Activated T-helper 2 cell treated with anti-CD3 and anti-CD28 coated beads, Interferon-gamma antibody, Interleukin-2, Interleukin-4, amounts not matched to agents 10 μg/mL and 5 μg/mL and 100 μg/mL, durations not matched to agents 14 hours and 24 hours and 36 hours (primary cell): ENCODE measurements at regions of chr6 and their contacts with region 1.

Region 1: DNA sequence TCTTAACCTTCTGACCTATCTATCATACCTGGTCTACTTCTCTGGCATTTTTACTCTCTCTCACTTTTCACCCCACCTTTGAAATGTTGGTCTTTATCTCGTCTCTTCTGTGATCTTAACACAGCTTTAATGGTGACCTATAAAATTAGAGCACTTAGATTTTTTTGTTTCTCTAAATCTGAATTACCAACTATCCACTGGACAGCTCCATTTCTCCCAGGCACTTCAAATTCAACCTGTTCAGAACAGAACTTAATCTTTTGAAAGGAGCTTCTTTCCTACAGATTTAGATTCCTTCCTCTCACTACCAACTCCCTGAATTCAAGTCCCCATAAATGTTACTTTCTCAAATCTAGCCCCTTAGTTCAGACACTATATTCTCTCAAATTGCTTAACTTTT is 15.0 kb upstream of the MTFR2 start:
- DNase-seq: no peak
- H3K4me3 Mint-ChIP-seq: no peak overlapping the region
- H3K27ac Mint-ChIP-seq: peak overlapping the region; percentile 9
- H3K4me1 Mint-ChIP-seq: peaks cover 34% of the 10 kb centered on the region
- H3K27me3 Mint-ChIP-seq: no peaks in the 10 kb centered on the region

Region 2: GRCh38 chr6:134994431-134994830 is 1270.7 kb before region 1 on chr6:
- intact Hi-C with region 1: loop called (anchors 5 kb)
- DNase-seq: no peak
- H3K4me3 Mint-ChIP-seq: no peak overlapping the region
- H3K27ac Mint-ChIP-seq: no peak overlapping the region
- H3K4me1 Mint-ChIP-seq: peaks cover 34% of the 10 kb centered on the region
- H3K27me3 Mint-ChIP-seq: no peaks in the 10 kb centered on the region

Region 3: DNA sequence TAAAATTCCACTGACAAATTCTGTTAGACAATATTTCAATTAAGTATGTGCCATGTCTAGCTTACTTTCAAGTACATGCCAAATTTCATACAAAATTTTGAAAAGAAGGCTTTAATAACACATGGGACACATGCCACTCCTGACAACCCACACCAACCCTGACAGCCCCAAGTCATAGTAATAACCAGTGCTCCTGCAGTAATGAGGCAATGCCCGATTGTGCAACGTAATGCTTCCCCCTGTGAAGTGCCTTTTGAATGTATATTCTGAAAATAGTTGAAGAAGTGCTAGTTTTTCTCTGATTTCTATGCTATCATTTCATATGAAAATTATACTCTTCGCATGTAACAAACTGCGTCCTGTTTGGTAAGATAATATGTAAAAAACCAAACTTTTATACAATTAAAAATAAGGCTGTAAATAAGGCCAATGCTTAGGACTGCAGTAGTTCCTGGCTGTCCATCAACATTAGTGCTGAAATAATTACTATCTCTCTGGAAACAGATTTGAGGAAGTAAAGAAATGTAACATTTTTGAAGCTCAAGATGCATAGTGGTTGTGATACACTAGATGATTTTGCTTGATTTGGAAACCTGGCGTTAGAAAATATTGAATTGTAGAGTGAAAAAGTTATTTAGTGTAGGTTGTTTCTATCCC is 150.4 kb after region 1 on chr6:
- intact Hi-C with region 1: no loop called
- DNase-seq: no peak
- H3K4me3 Mint-ChIP-seq: no peak overlapping the region
- H3K27ac Mint-ChIP-seq: no peak overlapping the region
- H3K4me1 Mint-ChIP-seq: peaks cover under 1% of the 10 kb centered on the region
- H3K27me3 Mint-ChIP-seq: no peaks in the 10 kb centered on the region